ENCODE measurements at regions of chr9 and their contacts with region 1.

Region 1: GRCh38 chr9:126419475-126419874 is 92.8 kb downstream of the MVB12B start:
- DNase-seq: no peak
- ATAC-seq: no peak
- H3K4me3 ChIP-seq: no peak overlapping the region
- H3K27ac ChIP-seq: no peak overlapping the region
- H3K4me1 ChIP-seq: no peaks in the 10 kb centered on the region
- H3K27me3 ChIP-seq: no peaks in the 10 kb centered on the region

Region 2: DNA sequence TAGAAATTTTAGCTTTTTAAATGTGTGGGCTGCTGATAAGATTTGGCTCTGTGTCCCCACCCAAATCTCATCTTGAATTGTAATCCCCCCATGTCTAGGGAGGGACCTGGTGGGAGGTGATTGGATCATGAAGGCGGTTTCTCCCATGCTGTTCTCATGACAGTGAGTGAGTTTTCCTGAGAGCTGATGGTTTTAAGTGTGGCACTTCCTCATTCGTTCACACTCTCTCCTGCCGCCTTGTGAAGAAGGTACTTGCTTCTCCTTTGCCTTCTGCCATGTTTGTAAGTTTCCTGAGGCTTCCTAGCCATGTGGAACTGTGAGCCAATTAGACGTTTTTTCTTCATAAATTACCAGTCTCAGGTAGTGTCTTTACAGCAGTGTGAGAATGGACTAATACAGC is 220.6 kb before region 1 on chr9:
- intact Hi-C with region 1: loop called in 1 of 2 experiments (anchors 5 kb)
- DNase-seq: no peak
- ATAC-seq: no peak
- H3K4me3 ChIP-seq: no peak overlapping the region
- H3K27ac ChIP-seq: no peak overlapping the region
- H3K4me1 ChIP-seq: no peaks in the 10 kb centered on the region
- H3K27me3 ChIP-seq: no peaks in the 10 kb centered on the region

Region 3: GRCh38 chr9:126482361-126483044 is 63.0 kb after region 1 on chr9:
- intact Hi-C with region 1: no loop called
- DNase-seq: peak; percentile 77 to 89
- ATAC-seq: peak; percentile 77
- H3K4me3 ChIP-seq: no peak overlapping the region
- H3K27ac ChIP-seq: no peak overlapping the region
- H3K4me1 ChIP-seq: no peaks in the 10 kb centered on the region
- H3K27me3 ChIP-seq: no peaks in the 10 kb centered on the region

Measured in aorta (tissue), 5 donors.